ENCODE measurements at regions of chr7 and their contacts with region 1.

Region 1: GRCh38 chr7:2567679-2568278 is 9.0 kb downstream of the IQCE start:
- DNase-seq: peak; percentile 28
- H3K4me3 ChIP-seq: no peak overlapping the region
- H3K27ac ChIP-seq: no peak overlapping the region
- H3K27me3 ChIP-seq: no peaks in the 10 kb centered on the region
- CTCF ChIP-seq: peak; percentile 77

Region 2: DNA sequence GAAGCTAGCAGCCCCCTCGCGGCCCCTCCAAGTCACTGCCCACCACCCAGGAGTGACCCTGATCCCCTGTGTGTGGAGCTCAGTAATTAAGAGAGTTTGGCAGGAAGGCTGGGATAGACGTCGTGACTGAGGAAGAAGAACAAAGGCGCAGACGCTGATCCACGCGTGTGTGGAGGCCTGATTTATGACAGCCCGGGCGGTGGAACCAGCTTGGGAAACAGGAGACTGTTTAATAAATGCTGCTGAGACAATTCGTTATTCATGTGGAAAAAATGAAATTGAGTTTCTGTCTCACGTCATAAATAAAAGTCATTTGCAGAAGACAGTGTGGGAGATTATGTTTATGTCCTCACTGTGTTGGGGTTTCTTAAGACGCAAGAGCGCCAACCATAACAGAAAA is 766.9 kb before region 1 on chr7:
- in situ Hi-C with region 1: no loop called
- DNase-seq: no peak
- H3K4me3 ChIP-seq: no peak overlapping the region
- H3K27ac ChIP-seq: no peak overlapping the region
- H3K27me3 ChIP-seq: no peaks in the 10 kb centered on the region
- CTCF ChIP-seq: no peak

Region 3: DNA sequence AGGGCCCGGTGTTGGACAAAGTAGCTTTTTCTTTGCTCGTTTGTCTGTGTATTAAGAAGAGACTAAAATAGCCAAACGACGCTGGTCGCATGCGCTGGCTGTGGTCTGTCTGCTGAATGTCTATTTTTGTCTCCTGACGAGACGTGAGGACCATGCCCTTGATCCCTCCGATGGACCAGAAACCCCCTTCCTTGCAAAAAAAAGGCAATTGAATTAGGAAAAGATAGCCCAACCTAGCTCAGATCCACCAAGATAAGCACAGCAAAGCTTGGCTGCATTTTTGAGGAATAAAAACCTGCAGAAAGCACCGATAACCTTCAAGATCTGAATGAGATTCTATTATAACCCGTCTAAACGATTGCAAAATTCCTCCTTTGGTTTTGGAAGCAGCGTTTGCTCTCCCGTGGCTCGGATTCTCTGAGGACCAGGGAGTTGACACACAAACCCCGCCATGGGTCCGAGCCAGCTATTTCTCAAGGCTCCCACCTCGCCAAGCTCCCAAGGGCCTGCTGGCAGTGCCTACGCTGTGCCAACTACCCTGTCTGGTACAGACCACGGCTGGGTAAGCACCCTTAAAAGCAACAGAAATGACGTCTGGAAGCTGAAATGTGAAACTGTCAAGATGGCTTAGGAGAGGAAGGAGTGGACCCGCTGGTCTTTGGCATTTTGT is 46.3 kb after region 1 on chr7:
- in situ Hi-C with region 1: loop called (anchors 10 kb)
- DNase-seq: no peak
- H3K4me3 ChIP-seq: no peak overlapping the region
- H3K27ac ChIP-seq: no peak overlapping the region
- H3K27me3 ChIP-seq: no peaks in the 10 kb centered on the region
- CTCF ChIP-seq: no peak

Region 4: DNA sequence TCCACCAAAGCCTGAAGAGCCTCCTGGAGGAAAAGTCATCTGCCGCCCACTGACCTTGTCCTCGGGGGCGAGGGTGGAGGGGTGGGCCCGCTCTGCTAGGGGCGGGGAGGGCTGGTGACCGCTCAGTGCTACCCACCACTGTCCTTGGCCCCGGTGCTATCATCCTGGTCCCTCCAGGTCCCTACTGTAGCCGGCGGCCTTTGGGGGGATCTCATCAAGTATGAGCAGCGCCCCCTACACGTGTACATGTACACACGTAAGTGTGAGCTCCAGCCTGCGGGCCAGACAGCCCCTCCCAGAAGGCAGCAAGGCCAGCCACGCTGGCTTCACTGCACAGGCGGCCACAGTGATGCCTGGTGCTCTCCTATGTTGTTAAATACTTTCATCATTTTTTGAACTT is 83.6 kb after region 1 on chr7:
- in situ Hi-C with region 1: loop called (anchors 5 kb)
- DNase-seq: no peak
- H3K4me3 ChIP-seq: no peak overlapping the region
- H3K27ac ChIP-seq: no peak overlapping the region
- H3K27me3 ChIP-seq: no peaks in the 10 kb centered on the region
- CTCF ChIP-seq: peak; percentile 26